H1 (cell line): ENCODE measurements at regions of chr17 and their contacts with region 1.

Region 1: GRCh38 chr17:58312021-58312630 is 16.5 kb downstream of the TSPOAP1 start:
- DNase-seq: peak in 1 of 2 experiments; percentile 40
- H3K4me3 ChIP-seq: no peak overlapping the region
- H3K27ac ChIP-seq: no peak overlapping the region; the same call in 1 of the 2 replicates
- H3K4me1 ChIP-seq: peaks cover 0 to 11% (median 6%) of the 10 kb centered on the region in 4 experiments; a peak in 4 of 7 replicates
- H3K27me3 ChIP-seq: no peaks in the 10 kb centered on the region
- CTCF ChIP-seq: no peak
- EP300 ChIP-seq: no peak
- POLR2A ChIP-seq: no peak
- RAD21 ChIP-seq: no peak

Region 2: DNA sequence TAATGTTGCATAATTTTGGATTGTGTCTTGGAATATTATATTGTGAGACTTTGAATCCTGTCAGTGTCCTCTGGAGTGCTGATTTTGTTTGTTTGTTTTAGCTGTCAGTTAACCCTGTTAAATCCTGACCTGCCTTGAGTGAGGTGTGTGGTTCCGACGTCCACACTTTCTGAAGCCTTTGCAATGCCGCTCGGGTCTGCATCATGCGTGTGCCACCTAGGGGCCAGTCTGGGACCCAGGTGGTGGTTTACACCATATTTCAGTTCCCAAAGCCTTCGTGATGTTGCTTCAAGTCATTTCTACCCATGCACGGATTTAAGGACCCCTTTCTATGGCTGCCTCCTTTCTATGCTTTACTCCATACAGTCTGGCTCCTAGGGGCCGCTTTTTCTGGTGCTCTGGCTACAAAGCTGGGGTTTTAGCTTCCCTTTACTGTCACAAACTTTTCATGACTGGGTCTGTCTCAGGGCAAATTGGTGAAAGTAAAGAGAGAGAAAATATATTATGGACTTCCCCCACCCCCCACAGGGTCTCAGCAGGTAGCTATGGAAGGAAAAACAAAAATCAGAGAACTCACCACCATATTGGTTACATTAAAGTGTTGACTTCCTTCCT is 175.3 kb before region 1 on chr17:
- CTCF ChIA-PET with region 1: no interaction called
- POLR2A ChIA-PET with region 1: no interaction called
- DNase-seq: peak in 1 of 2 experiments; percentile 48
- H3K4me3 ChIP-seq: no peak overlapping the region
- H3K27ac ChIP-seq: no peak overlapping the region
- H3K4me1 ChIP-seq: no peaks in the 10 kb centered on the region
- H3K27me3 ChIP-seq: peaks cover 0 to 1% (median 0%) of the 10 kb centered on the region in 4 experiments; a peak in 1 of 7 replicates
- CTCF ChIP-seq: peak; percentile 49 to 63 (median 57)
- EP300 ChIP-seq: no peak
- POLR2A ChIP-seq: no peak
- RAD21 ChIP-seq: peak; percentile 52 to 62

Region 3: DNA sequence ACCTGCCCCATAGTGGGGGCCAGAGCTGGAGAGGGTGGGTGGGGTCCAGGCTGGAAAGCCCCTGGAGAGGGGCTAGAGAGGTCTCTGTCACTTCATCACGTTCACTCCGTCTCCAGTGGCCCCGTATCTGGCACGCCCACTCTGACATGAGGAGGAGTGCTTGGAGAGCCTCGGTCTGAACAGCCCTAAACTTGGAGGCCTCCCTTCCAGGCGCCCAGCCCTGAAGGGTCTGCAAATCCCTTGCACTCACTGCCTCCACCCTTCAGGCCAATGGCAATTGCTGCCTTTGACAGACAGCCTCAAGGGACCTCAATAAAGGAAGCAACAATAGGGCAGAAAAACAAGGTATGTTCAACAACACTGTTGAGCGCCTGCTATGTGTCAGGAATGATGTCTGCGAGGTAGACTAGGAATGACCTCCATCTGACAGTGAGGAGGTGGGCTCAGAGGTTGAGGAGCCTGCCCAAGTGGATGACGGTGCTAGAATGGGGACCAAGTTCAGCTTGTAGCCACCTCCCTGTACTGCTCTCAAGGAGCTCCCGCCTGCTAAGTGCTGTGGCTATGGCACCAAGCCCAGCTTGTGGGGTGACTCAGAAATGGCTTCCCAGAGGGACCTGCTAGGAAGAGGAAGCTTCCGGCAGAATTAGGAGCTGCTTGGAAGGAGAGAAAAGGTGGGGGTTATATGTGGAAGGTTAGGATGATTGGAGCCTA is 122.5 kb before region 1 on chr17:
- CTCF ChIA-PET with region 1: no interaction called
- POLR2A ChIA-PET with region 1: no interaction called
- DNase-seq: no peak
- H3K4me3 ChIP-seq: no peak overlapping the region
- H3K27ac ChIP-seq: no peak overlapping the region
- H3K4me1 ChIP-seq: peaks cover 0 to 6% (median 2%) of the 10 kb centered on the region in 4 experiments; a peak in 4 of 7 replicates
- H3K27me3 ChIP-seq: no peaks in the 10 kb centered on the region
- CTCF ChIP-seq: no peak
- EP300 ChIP-seq: no peak
- POLR2A ChIP-seq: no peak
- RAD21 ChIP-seq: no peak

Region 4: DNA sequence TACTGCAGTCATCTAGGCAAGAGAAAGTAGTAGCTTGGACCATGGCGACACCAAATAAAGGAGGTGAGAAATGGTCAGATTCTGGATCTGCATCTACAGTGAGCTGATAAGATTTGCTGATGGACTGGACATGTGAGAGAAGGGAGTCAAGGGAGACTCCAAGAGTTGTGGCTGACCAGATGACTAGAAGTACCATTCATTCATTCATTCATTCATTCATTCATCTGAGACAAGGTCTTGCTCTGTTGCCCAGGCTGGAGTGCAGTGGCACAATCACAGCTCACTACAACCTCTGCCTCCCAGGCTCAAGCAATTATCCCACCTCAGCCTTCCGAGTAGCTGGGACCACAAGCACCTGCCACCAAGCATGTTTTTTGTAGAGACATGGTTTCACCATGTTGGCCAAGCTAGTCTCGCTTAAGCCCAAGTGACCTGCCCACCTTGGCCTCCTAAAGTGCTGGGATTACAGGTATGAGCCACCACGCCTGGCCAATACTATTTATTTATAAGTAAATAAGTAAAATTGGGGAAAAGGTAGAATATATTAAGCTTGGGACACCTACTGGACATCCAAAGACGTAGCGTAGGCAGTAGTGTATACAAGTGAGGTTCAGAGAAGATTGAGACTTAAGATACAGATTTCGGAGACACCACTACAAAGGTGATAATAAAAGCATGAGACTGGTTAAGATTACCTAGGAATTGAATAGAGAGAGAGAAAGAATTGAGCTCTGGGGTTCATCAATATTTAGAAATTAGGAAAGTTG is 120.9 kb after region 1 on chr17:
- CTCF ChIA-PET with region 1: interaction called, 24 read pairs
- POLR2A ChIA-PET with region 1: no interaction called
- DNase-seq: no peak
- H3K4me3 ChIP-seq: no peak overlapping the region
- H3K27ac ChIP-seq: no peak overlapping the region
- H3K4me1 ChIP-seq: no peaks in the 10 kb centered on the region
- H3K27me3 ChIP-seq: peaks cover 0 to 2% (median 0%) of the 10 kb centered on the region in 4 experiments; a peak in 1 of 7 replicates
- CTCF ChIP-seq: no peak
- EP300 ChIP-seq: no peak
- POLR2A ChIP-seq: no peak
- RAD21 ChIP-seq: no peak